CD8-positive, alpha-beta memory T cell (primary cell): ENCODE measurements at regions of chr2 and their contacts with region 1.

Region 1: GRCh38 chr2:196220671-196221070 is 49.3 kb upstream of the STK17B start:
- DNase-seq: peak in 1 of 5 donors; percentile 61
- H3K4me3 ChIP-seq: no peak overlapping the region
- H3K4me3 Mint-ChIP-seq: peak overlapping the region in 5 of 7 donors; percentile 10 to 39 (median 16)
- H3K27ac ChIP-seq: no peak overlapping the region
- H3K27ac Mint-ChIP-seq: peak overlapping the region in 7 of 8 donors; percentile 9 to 71 (median 45)
- H3K4me1 ChIP-seq: peaks cover 39% of the 10 kb centered on the region
- H3K4me1 Mint-ChIP-seq: peaks cover 42 to 76% (median 70%) of the 10 kb centered on the region in 3 donors
- H3K27me3 ChIP-seq: no peaks in the 10 kb centered on the region
- H3K27me3 Mint-ChIP-seq: no peaks in the 10 kb centered on the region

Region 2: GRCh38 chr2:196076778-196077568 is 143.7 kb before region 1 on chr2:
- CTCF ChIA-PET with region 1: interaction called, 43 read pairs
- POLR2A ChIA-PET with region 1: interaction called, 3 read pairs
- DNase-seq: no peak
- H3K4me3 ChIP-seq: no peak overlapping the region
- H3K4me3 Mint-ChIP-seq: no peak overlapping the region
- H3K27ac ChIP-seq: no peak overlapping the region
- H3K27ac Mint-ChIP-seq: peak overlapping the region in 1 of 8 donors; percentile 34
- H3K4me1 ChIP-seq: peaks cover 11% of the 10 kb centered on the region
- H3K4me1 Mint-ChIP-seq: peaks cover 4 to 40% (median 20%) of the 10 kb centered on the region in 3 donors
- H3K27me3 ChIP-seq: no peaks in the 10 kb centered on the region
- H3K27me3 Mint-ChIP-seq: no peaks in the 10 kb centered on the region

Region 3: DNA sequence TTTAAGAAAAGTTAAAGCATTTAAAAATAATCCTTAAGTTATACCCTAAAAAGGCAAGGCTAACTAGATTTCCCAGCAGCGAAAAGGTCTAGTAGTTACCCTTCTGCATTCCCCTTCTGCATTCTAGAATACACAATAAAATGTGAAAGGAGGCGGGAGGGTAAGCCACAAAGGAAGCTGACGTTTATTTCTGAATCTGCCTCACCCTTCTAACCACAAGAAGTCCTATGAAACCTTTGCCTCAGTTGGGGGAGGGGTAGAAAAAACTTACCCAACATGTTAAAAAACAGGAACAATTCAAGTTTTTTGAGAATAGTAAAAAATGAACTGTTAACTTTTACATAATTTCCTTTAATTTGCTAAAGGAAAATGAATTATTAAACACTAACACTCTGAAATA is 60.6 kb before region 1 on chr2:
- CTCF ChIA-PET with region 1: interaction called, 13 read pairs
- POLR2A ChIA-PET with region 1: interaction called, 5 read pairs
- DNase-seq: peak; percentile 36 to 90 (median 80)
- H3K4me3 ChIP-seq: peak overlapping the region; percentile 9
- H3K4me3 Mint-ChIP-seq: peak overlapping the region; percentile 72 to 96 (median 85)
- H3K27ac ChIP-seq: peak overlapping the region; percentile 45
- H3K27ac Mint-ChIP-seq: peak overlapping the region; percentile 71 to 99 (median 98)
- H3K4me1 ChIP-seq: peaks cover 88% of the 10 kb centered on the region
- H3K4me1 Mint-ChIP-seq: peaks cover 78 to 97% (median 93%) of the 10 kb centered on the region in 3 donors
- H3K27me3 ChIP-seq: no peaks in the 10 kb centered on the region
- H3K27me3 Mint-ChIP-seq: peaks cover 0 to 4% of the 10 kb centered on the region in 2 donors

Region 4: GRCh38 chr2:196233021-196233804 is 12.5 kb after region 1 on chr2:
- CTCF ChIA-PET with region 1: interaction called, 23 read pairs
- POLR2A ChIA-PET with region 1: interaction called, 12 read pairs
- DNase-seq: no peak
- H3K4me3 ChIP-seq: no peak overlapping the region
- H3K4me3 Mint-ChIP-seq: peak overlapping the region in 2 of 7 donors; percentile 39 to 45
- H3K27ac ChIP-seq: no peak overlapping the region
- H3K27ac Mint-ChIP-seq: peak overlapping the region; percentile 88 to 95 (median 90)
- H3K4me1 ChIP-seq: peaks cover 83% of the 10 kb centered on the region
- H3K4me1 Mint-ChIP-seq: peaks cover 69 to 94% (median 90%) of the 10 kb centered on the region in 3 donors
- H3K27me3 ChIP-seq: no peaks in the 10 kb centered on the region
- H3K27me3 Mint-ChIP-seq: no peaks in the 10 kb centered on the region

Region 5: GRCh38 chr2:196331143-196331542 is 110.5 kb after region 1 on chr2:
- CTCF ChIA-PET with region 1: no interaction called
- POLR2A ChIA-PET with region 1: no interaction called
- DNase-seq: no peak
- H3K4me3 ChIP-seq: no peak overlapping the region
- H3K4me3 Mint-ChIP-seq: no peak overlapping the region
- H3K27ac ChIP-seq: no peak overlapping the region
- H3K27ac Mint-ChIP-seq: no peak overlapping the region
- H3K4me1 ChIP-seq: no peaks in the 10 kb centered on the region
- H3K4me1 Mint-ChIP-seq: no peaks in the 10 kb centered on the region
- H3K27me3 ChIP-seq: no peaks in the 10 kb centered on the region
- H3K27me3 Mint-ChIP-seq: peaks cover 2 to 15% of the 10 kb centered on the region in 2 donors